Endothelial cell of umbilical vein (primary cell): ENCODE measurements at regions of chr13 and their contacts with region 1.

Region 1: DNA sequence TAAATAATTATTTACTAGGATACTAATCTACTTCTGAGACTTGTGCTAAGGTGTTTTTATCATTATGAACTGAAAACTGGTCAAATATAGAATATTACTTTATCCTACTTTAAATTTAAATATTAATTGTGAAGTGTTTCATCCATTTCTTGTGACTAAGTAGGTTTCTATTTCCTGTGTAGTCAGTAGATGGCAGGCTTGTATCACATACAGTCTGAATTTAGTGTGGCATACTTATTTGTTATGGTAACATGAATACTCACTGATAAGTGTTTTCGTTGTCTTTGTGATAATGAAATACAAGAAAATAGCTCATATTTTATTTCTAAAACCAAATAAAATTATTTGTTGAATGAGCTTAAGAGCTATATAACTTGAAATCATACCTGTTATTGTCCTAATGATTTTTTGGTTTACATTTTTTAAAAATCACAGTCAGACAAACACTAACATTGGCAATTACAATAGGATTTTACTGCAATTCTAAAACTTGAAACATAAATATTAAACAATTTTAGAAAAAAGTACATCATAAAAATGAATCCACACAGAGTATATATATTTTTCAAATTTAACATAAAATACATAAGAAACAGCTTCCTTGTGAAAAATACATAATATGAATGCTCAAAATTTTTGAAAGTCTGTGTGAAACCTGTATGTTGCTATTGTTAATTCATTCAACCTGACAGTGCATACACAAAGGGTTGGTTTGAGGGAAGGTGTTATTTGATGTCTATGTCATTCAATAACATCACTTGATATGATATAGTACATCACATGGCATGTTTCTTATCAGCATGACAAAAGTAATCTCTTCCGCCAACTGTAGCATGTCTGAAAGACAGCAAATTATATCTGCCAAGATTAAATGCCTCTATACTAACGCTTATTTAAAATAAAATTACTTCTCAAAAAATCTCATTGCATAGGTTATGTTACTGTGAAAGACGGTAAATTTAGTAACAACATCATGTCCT is 904.8 kb upstream of the PCDH20 start:
- DNase-seq: peak; percentile 58
- H3K4me3 ChIP-seq: no peak overlapping the region
- H3K27ac ChIP-seq: no peak overlapping the region
- H3K4me1 ChIP-seq: no peaks in the 10 kb centered on the region
- H3K27me3 ChIP-seq: no peaks in the 10 kb centered on the region
- CTCF ChIP-seq: peak in 1 of 2 donors; percentile 23
- POLR2A ChIP-seq: no peak

Region 2: GRCh38 chr13:62022369-62022768 is 298.1 kb before region 1 on chr13:
- CTCF ChIA-PET with region 1: no interaction called
- POLR2A ChIA-PET with region 1: no interaction called
- dilution Hi-C with region 1: no loop called
- intact Hi-C with region 1: no loop called
- DNase-seq: no peak
- H3K4me3 ChIP-seq: no peak overlapping the region
- H3K27ac ChIP-seq: no peak overlapping the region
- H3K4me1 ChIP-seq: no peaks in the 10 kb centered on the region
- H3K27me3 ChIP-seq: no peaks in the 10 kb centered on the region
- CTCF ChIP-seq: no peak
- POLR2A ChIP-seq: no peak

Region 3: GRCh38 chr13:63124863-63125262 is 804.4 kb after region 1 on chr13:
- CTCF ChIA-PET with region 1: no interaction called
- POLR2A ChIA-PET with region 1: no interaction called
- dilution Hi-C with region 1: no loop called
- intact Hi-C with region 1: loop called (anchors 5 kb)
- DNase-seq: peak; percentile 29
- H3K4me3 ChIP-seq: no peak overlapping the region
- H3K27ac ChIP-seq: no peak overlapping the region
- H3K4me1 ChIP-seq: no peaks in the 10 kb centered on the region
- H3K27me3 ChIP-seq: no peaks in the 10 kb centered on the region
- CTCF ChIP-seq: no peak
- POLR2A ChIP-seq: no peak